CD8-positive, alpha-beta T cell (primary cell): ENCODE measurements at regions of chr15 and their contacts with region 1.

Region 1: GRCh38 chr15:81265944-81266775 is 57.8 kb downstream of the STARD5 start:
- DNase-seq: peak; percentile 64 to 88 (median 84)
- ATAC-seq: peak; percentile 84
- H3K4me3 ChIP-seq: peak overlapping the region; percentile 9 to 13
- H3K4me3 Mint-ChIP-seq: peak overlapping the region; percentile 78
- H3K27ac ChIP-seq: no peak overlapping the region
- H3K27ac Mint-ChIP-seq: peak overlapping the region; percentile 7
- H3K4me1 ChIP-seq: peaks cover 29% of the 10 kb centered on the region
- H3K4me1 Mint-ChIP-seq: peaks cover 47% of the 10 kb centered on the region
- H3K27me3 ChIP-seq: no peaks in the 10 kb centered on the region
- H3K27me3 Mint-ChIP-seq: no peaks in the 10 kb centered on the region
- CTCF ChIP-seq: peak; percentile 77

Region 2: GRCh38 chr15:80970018-80970658 is 296.0 kb before region 1 on chr15:
- CTCF ChIA-PET with region 1: interaction called, 11 read pairs
- POLR2A ChIA-PET with region 1: no interaction called
- intact Hi-C with region 1: no loop called
- DNase-seq: peak; percentile 22 to 75 (median 61)
- ATAC-seq: peak; percentile 69
- H3K4me3 ChIP-seq: no peak overlapping the region
- H3K4me3 Mint-ChIP-seq: no peak overlapping the region
- H3K27ac ChIP-seq: no peak overlapping the region
- H3K27ac Mint-ChIP-seq: no peak overlapping the region
- H3K4me1 ChIP-seq: no peaks in the 10 kb centered on the region
- H3K4me1 Mint-ChIP-seq: peaks cover 8% of the 10 kb centered on the region
- H3K27me3 ChIP-seq: no peaks in the 10 kb centered on the region
- H3K27me3 Mint-ChIP-seq: no peaks in the 10 kb centered on the region
- CTCF ChIP-seq: peak; percentile 92

Region 3: DNA sequence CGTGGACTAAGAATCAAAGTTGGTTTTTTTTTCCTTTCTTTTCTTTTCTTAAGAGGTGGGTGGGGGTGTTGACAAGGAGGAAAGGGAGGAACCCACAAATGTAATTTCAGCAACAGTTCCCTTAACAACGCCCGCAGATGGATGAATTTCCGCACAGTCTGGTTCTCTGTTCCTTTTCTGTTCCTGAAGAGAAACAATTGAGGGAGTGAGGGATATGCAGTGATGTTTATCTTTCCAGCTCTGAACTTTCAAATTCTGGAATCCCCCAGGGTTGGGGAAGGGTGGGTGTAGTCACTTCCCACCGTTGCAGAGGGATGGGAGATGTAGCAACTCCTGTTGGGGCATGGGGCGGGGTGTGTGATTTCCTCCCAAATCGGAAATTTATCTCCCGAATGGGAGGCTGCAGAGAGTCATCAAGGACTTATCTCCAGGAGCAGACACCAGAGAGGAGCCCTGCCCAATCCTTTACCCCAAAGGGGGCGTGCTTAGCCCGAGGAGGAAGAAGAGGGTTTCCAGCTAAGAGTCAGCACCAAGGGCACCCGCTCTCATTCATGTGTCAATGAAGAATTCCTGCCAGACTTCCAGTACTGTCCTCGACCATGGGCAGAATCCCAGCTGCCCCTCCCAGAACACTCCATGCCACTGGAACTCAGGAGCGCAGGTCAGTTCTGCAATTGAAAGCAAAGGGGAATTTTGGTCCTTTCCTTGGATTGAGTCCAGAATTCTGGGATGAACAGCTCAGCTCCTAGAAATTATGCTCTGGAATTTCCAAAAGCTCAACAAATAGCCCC is 167.1 kb before region 1 on chr15:
- CTCF ChIA-PET with region 1: interaction called, 82 read pairs
- POLR2A ChIA-PET with region 1: no interaction called
- intact Hi-C with region 1: no loop called
- DNase-seq: no peak
- ATAC-seq: no peak
- H3K4me3 ChIP-seq: no peak overlapping the region
- H3K4me3 Mint-ChIP-seq: no peak overlapping the region
- H3K27ac ChIP-seq: no peak overlapping the region
- H3K27ac Mint-ChIP-seq: no peak overlapping the region
- H3K4me1 ChIP-seq: no peaks in the 10 kb centered on the region
- H3K4me1 Mint-ChIP-seq: peaks cover 7% of the 10 kb centered on the region
- H3K27me3 ChIP-seq: peaks cover 0 to 4% of the 10 kb centered on the region in 2 experiments
- H3K27me3 Mint-ChIP-seq: peaks cover 47% of the 10 kb centered on the region
- CTCF ChIP-seq: no peak

Region 4: DNA sequence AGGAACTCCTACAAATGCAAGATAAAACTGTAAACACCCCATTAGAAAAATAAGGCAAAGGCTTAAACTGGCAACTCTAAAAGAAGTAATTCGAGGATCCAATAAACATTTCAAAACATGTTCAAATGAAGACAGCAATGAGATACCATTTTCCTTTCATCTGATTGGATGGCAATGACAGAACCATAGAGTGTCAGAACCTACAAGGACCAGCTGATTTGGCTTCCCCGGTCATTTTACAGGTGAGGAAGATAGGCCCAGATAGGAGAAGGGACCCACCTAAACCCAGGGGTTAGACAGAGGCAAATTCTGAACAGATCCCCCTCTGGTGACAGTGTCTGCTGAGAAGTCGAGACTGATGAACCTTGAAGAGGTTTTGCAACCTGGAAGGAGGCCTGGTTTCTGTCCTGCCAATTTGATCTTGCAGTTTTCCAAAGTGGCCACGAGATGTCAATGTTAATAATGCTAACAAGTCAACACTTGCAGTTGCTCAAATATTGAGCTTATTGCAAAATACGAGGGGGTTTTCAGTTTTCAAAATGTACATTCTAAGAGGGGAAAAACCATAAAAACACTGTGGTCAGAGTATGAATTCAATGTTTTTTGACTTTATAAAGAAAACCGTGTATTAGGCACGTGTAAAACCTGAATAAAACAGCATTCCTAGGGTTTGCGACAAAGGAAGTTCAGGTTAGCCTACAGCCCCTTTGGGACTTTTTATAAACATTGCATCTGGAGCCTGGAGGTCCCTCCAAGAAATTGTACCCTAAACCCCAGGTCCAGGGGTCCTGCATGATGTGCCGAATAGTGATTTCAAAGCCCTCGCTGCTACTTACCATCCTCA is 110.6 kb before region 1 on chr15:
- CTCF ChIA-PET with region 1: interaction called, 99 read pairs
- POLR2A ChIA-PET with region 1: interaction called, 4 read pairs
- intact Hi-C with region 1: loop called (anchors 1 kb)
- DNase-seq: peak in 4 of 9 experiments; percentile 11 to 50 (median 42)
- ATAC-seq: no peak
- H3K4me3 ChIP-seq: no peak overlapping the region
- H3K4me3 Mint-ChIP-seq: no peak overlapping the region
- H3K27ac ChIP-seq: no peak overlapping the region
- H3K27ac Mint-ChIP-seq: no peak overlapping the region
- H3K4me1 ChIP-seq: no peaks in the 10 kb centered on the region
- H3K4me1 Mint-ChIP-seq: no peaks in the 10 kb centered on the region
- H3K27me3 ChIP-seq: no peaks in the 10 kb centered on the region
- H3K27me3 Mint-ChIP-seq: peaks cover 4% of the 10 kb centered on the region
- CTCF ChIP-seq: peak; percentile 40

Region 5: DNA sequence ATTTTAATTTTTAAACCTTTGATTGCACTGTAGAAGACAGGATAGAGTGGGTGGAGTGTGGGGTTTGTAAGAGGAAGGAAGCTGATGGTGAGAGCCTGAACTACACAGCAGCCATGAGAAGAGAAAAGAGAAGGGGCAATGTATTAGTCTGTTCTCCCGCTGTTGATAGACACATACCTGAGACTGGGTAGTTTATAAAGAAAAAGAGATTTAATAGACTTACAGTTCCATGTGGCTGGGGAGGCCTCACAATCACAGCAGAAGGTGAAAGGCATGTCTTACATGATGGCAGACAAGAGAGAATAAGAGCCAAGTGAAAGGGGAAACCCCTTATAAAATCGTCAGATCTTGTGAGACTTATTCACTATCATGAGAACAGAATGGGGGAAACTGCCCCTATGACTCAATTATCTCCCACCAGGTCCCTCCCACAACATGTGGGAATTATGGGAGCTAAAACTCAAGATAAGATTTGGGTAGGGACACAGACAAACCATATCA is 20.5 kb after region 1 on chr15:
- CTCF ChIA-PET with region 1: interaction called, 498 read pairs
- POLR2A ChIA-PET with region 1: interaction called, 7 read pairs
- intact Hi-C with region 1: no loop called
- DNase-seq: peak in 3 of 9 experiments; percentile 35 to 75 (median 53)
- ATAC-seq: peak; percentile 93
- H3K4me3 ChIP-seq: peak overlapping the region in 1 of 2 experiments; percentile 36
- H3K4me3 Mint-ChIP-seq: peak overlapping the region; percentile 75
- H3K27ac ChIP-seq: peak overlapping the region; percentile 48 to 88
- H3K27ac Mint-ChIP-seq: peak overlapping the region; percentile 98
- H3K4me1 ChIP-seq: peaks cover 83% of the 10 kb centered on the region
- H3K4me1 Mint-ChIP-seq: peaks cover 81% of the 10 kb centered on the region
- H3K27me3 ChIP-seq: no peaks in the 10 kb centered on the region
- H3K27me3 Mint-ChIP-seq: no peaks in the 10 kb centered on the region
- CTCF ChIP-seq: no peak

Region 6: GRCh38 chr15:81336568-81336967 is 70.4 kb after region 1 on chr15:
- CTCF ChIA-PET with region 1: interaction called, 434 read pairs
- POLR2A ChIA-PET with region 1: no interaction called
- intact Hi-C with region 1: loop called in 1 of 2 experiments (anchors 2 kb)
- DNase-seq: peak in 7 of 9 experiments; percentile 28 to 69 (median 46)
- ATAC-seq: peak; percentile 49
- H3K4me3 ChIP-seq: no peak overlapping the region
- H3K4me3 Mint-ChIP-seq: no peak overlapping the region
- H3K27ac ChIP-seq: no peak overlapping the region
- H3K27ac Mint-ChIP-seq: no peak overlapping the region
- H3K4me1 ChIP-seq: no peaks in the 10 kb centered on the region
- H3K4me1 Mint-ChIP-seq: peaks cover 15% of the 10 kb centered on the region
- H3K27me3 ChIP-seq: no peaks in the 10 kb centered on the region
- H3K27me3 Mint-ChIP-seq: no peaks in the 10 kb centered on the region
- CTCF ChIP-seq: peak; percentile 37

Region 7: GRCh38 chr15:81400640-81401236 is 134.6 kb after region 1 on chr15:
- CTCF ChIA-PET with region 1: interaction called, 102 read pairs
- POLR2A ChIA-PET with region 1: interaction called, 3 read pairs
- intact Hi-C with region 1: loop called in 1 of 2 experiments (anchors 2 kb)
- DNase-seq: peak in 3 of 9 experiments; percentile 17 to 73 (median 65)
- ATAC-seq: peak; percentile 62
- H3K4me3 ChIP-seq: no peak overlapping the region
- H3K4me3 Mint-ChIP-seq: no peak overlapping the region
- H3K27ac ChIP-seq: no peak overlapping the region
- H3K27ac Mint-ChIP-seq: no peak overlapping the region
- H3K4me1 ChIP-seq: no peaks in the 10 kb centered on the region
- H3K4me1 Mint-ChIP-seq: peaks cover 2% of the 10 kb centered on the region
- H3K27me3 ChIP-seq: no peaks in the 10 kb centered on the region
- H3K27me3 Mint-ChIP-seq: no peaks in the 10 kb centered on the region
- CTCF ChIP-seq: peak; percentile 78

Region 8: GRCh38 chr15:81427176-81427575 is 161.0 kb after region 1 on chr15:
- CTCF ChIA-PET with region 1: no interaction called
- POLR2A ChIA-PET with region 1: no interaction called
- intact Hi-C with region 1: no loop called
- DNase-seq: no peak
- ATAC-seq: no peak
- H3K4me3 ChIP-seq: no peak overlapping the region
- H3K4me3 Mint-ChIP-seq: no peak overlapping the region
- H3K27ac ChIP-seq: no peak overlapping the region
- H3K27ac Mint-ChIP-seq: no peak overlapping the region
- H3K4me1 ChIP-seq: no peaks in the 10 kb centered on the region
- H3K4me1 Mint-ChIP-seq: no peaks in the 10 kb centered on the region
- H3K27me3 ChIP-seq: no peaks in the 10 kb centered on the region
- H3K27me3 Mint-ChIP-seq: peaks cover 2% of the 10 kb centered on the region
- CTCF ChIP-seq: no peak